Activated T-helper 1 cell treated with anti-CD3 and anti-CD28 coated beads, Interleukin-12 subunit alpha, Interleukin-12 subunit beta, Interleukin-2, Interleukin-4 antibody, amounts not matched to agents 30 ng/mL and 10 ng/mL and 1 ng/mL, durations not matched to agents 14 hours and 24 hours and 36 hours (primary cell): ENCODE measurements at regions of chr1 and their contacts with region 1.

Region 1: DNA sequence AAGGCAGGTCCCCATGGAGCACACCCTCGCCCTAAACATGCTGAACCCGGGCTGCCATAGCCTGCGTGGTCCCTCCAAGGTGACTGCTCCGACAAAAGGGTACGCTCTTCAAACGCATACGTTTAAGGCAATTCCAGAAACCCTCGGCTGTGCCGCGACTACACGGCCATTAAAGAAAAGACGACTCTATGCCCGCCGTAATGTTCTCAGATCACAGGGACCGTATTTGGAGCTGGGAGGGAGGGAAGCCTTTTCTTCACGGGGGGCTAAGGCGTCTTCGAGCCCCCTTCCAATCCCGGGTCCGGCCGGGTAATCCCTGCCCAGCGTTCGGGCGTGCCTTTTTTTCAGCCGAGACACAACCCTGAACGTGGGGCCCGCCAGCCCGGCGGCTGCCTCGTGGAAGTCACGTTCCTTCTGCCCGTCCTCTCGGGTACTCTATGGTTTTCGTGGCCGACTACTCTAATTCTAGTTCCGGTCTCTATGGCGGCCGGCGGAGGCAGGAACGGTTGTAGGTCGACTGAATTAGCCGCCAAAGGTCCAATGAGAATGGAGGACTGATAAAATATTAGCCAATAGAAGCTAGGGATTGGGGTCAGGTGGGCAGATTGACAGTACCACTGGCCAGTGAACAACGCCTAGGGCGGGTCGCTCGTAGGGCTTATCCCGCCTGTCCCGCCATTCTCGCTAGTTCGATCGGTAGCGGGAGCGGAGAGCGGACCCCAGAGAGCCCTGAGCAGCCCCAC is at the start of gene YBX1:
- DNase-seq: peak; percentile 93
- H3K4me3 Mint-ChIP-seq: peak within 1 kb of the TSS; percentile 97
- H3K27ac Mint-ChIP-seq: peak within 1 kb of the TSS; percentile 94
- H3K4me1 Mint-ChIP-seq: peaks cover 57% of the 10 kb centered on the region
- H3K27me3 Mint-ChIP-seq: no peaks in the 10 kb centered on the region
- total RNA-seq, gene YBX1: 774 and 780 TPM in 2 replicates

Region 2: DNA sequence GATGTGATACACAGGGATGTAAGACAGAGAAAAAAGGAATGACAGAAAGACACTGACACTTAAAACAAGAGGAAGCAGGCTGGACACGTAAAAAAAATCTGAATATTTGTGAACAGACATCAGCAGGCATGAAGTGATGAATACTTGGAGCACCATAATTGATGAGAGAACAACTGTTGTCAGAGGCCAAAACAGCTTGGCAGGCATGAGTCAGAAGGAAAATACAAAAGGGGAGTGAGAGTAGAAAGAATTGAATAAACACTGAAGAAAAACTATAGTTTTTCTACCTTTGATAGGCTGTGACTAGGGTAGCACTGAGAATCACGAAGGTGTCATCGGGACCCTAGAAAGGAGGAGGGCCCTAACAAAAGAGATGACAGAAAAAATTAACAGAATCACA is 495.8 kb before region 1 on chr1:
- intact Hi-C with region 1: no loop called
- DNase-seq: no peak
- H3K4me3 Mint-ChIP-seq: no peak overlapping the region
- H3K27ac Mint-ChIP-seq: no peak overlapping the region
- H3K4me1 Mint-ChIP-seq: peaks cover 6% of the 10 kb centered on the region
- H3K27me3 Mint-ChIP-seq: no peaks in the 10 kb centered on the region

Region 3: DNA sequence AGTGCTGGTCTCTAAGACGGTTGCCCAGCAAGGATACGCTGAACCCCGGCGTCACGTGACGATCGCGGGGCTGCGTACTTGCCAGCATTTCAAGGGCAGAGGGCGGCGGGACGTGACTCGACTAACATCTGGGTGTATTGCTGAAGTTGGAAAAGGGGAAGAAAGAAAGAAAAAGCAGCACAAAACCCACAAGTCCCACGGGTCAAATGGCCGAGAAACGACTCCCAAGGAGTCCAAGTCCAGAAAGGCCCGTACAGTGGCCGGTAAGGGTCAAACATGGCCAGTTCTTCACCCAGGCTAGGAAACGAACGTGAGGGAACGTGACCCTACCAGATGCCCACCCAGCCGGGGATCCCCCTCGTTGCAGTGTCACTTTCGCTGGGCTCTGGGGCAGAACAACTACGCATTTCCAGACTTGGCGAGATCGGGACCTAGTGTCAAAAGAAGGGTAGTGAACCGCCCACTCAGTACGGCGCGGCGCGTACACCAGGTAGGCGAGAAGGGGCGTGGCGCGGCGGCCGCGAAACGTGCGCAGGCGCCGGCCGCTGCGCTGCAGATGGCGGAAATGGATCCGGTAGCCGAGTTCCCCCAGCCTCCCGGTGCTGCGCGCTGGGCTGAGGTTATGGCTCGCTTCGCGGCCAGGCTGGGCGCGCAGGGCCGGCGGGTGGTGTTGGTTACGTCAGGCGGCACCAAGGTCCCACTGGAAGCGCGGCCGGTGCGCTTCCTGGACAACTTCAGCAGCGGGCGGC is 225.7 kb before region 1 on chr1 and contains the starts of genes PPCS and ZMYND12:
- intact Hi-C with region 1: loop called (anchors 1 kb)
- DNase-seq: peak; percentile 87
- H3K4me3 Mint-ChIP-seq: peak within 1 kb of the TSS; percentile 95
- H3K27ac Mint-ChIP-seq: peak within 1 kb of the TSS; percentile 98
- H3K4me1 Mint-ChIP-seq: peaks cover 28% of the 10 kb centered on the region
- H3K27me3 Mint-ChIP-seq: no peaks in the 10 kb centered on the region
- total RNA-seq, gene PPCS: 40.1 and 48.0 TPM in 2 replicates
- total RNA-seq, gene ZMYND12: not detected in 2 replicates

Region 4: GRCh38 chr1:42657971-42658879 is 23.7 kb before region 1 on chr1 and contains the start of gene PPIH:
- intact Hi-C with region 1: loop called (anchors 1 kb)
- DNase-seq: peak; percentile 94
- H3K4me3 Mint-ChIP-seq: peak within 1 kb of the TSS; percentile 99
- H3K27ac Mint-ChIP-seq: peak within 1 kb of the TSS; percentile 96
- H3K4me1 Mint-ChIP-seq: peaks cover 46% of the 10 kb centered on the region
- H3K27me3 Mint-ChIP-seq: peaks cover 3% of the 10 kb centered on the region
- total RNA-seq, gene PPIH: 89.7 and 94.6 TPM in 2 replicates

Region 5: GRCh38 chr1:42846257-42847110 is 164.6 kb after region 1 on chr1 and contains the start of gene ZNF691:
- intact Hi-C with region 1: loop called (anchors 1 kb)
- DNase-seq: peak; percentile 86
- H3K4me3 Mint-ChIP-seq: peak within 1 kb of the TSS; percentile 97
- H3K27ac Mint-ChIP-seq: peak within 1 kb of the TSS; percentile 78
- H3K4me1 Mint-ChIP-seq: peaks cover 41% of the 10 kb centered on the region
- H3K27me3 Mint-ChIP-seq: no peaks in the 10 kb centered on the region
- total RNA-seq, gene ZNF691: 10.0 and 12.9 TPM in 2 replicates

Region 6: DNA sequence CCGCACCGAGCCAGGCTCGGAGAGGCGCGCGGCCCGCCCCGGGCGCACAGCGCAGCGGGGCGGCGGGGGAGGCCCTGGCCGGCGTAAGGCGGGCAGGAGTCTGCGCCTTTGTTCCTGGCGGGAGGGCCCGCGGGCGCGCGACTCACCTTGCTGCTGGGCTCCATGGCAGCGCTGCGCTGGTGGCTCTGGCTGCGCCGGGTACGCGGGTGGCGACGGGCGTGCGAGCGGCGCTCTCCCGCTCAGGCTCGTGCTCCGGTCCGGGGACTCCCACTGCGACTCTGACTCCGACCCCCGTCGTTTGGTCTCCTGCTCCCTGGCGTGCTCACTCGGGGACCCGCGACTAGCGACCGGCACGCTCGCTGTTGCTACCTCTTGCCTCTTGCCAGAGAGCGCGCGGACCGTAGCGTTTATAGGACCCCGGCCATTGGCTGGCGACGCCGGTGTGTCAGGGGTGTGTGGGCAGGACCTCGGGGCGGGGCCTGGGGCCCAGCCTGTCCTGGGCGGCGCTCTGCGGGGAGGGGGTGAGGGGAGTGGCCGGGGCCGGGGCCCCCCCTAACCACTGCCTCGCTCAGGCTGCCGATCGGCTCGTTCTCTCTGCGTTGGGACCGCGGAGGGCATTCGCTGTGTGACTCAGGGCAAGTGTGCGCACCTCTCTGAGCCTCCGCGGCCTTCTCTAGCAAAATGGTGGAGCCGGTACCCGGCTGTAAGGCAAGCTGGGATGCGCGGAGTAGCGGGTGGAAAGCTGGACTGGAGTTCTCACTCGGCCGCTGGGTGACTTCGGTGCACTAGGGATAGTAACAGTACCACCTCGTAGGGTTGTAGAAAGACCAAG is 276.8 kb after region 1 on chr1 and contains the start of gene SLC2A1:
- intact Hi-C with region 1: loop called (anchors 2 kb)
- DNase-seq: peak; percentile 93
- H3K4me3 Mint-ChIP-seq: peak within 1 kb of the TSS; percentile 97
- H3K27ac Mint-ChIP-seq: peak within 1 kb of the TSS; percentile 100
- H3K4me1 Mint-ChIP-seq: peaks cover 51% of the 10 kb centered on the region
- H3K27me3 Mint-ChIP-seq: peaks cover 6% of the 10 kb centered on the region
- total RNA-seq, gene SLC2A1: 111 and 120 TPM in 2 replicates

Region 7: GRCh38 chr1:43650310-43651085 is 968.6 kb after region 1 on chr1:
- intact Hi-C with region 1: loop called (anchors 5 kb)
- DNase-seq: peak; percentile 89
- H3K4me3 Mint-ChIP-seq: peak overlapping the region; percentile 98
- H3K27ac Mint-ChIP-seq: peak overlapping the region; percentile 98
- H3K4me1 Mint-ChIP-seq: peaks cover 27% of the 10 kb centered on the region
- H3K27me3 Mint-ChIP-seq: peaks cover under 1% of the 10 kb centered on the region